Activated naive CD4-positive, alpha-beta T cell treated with anti-CD3 and anti-CD28 coated beads for 36 hours (primary cell): ENCODE measurements at regions of chr4 and their contacts with region 1.

Region 1: GRCh38 chr4:110165382-110166285 is 32.8 kb downstream of the ELOVL6 start:
- DNase-seq: peak; percentile 85
- H3K4me3 Mint-ChIP-seq: peak overlapping the region; percentile 54
- H3K27ac Mint-ChIP-seq: peak overlapping the region; percentile 95
- H3K4me1 Mint-ChIP-seq: peaks cover 35% of the 10 kb centered on the region
- H3K27me3 Mint-ChIP-seq: no peaks in the 10 kb centered on the region

Region 2: GRCh38 chr4:109977854-109978501 is 187.7 kb before region 1 on chr4:
- CTCF ChIA-PET with region 1: no interaction called
- intact Hi-C with region 1: no loop called
- DNase-seq: peak; percentile 13
- H3K4me3 Mint-ChIP-seq: no peak overlapping the region
- H3K27ac Mint-ChIP-seq: no peak overlapping the region
- H3K4me1 Mint-ChIP-seq: no peaks in the 10 kb centered on the region
- H3K27me3 Mint-ChIP-seq: peaks cover 7% of the 10 kb centered on the region

Region 3: GRCh38 chr4:110124711-110125110 is 40.9 kb before region 1 on chr4:
- CTCF ChIA-PET with region 1: no interaction called
- intact Hi-C with region 1: loop called (anchors 5 kb)
- DNase-seq: no peak
- H3K4me3 Mint-ChIP-seq: no peak overlapping the region
- H3K27ac Mint-ChIP-seq: no peak overlapping the region
- H3K4me1 Mint-ChIP-seq: peaks cover 8% of the 10 kb centered on the region
- H3K27me3 Mint-ChIP-seq: no peaks in the 10 kb centered on the region

Region 4: GRCh38 chr4:110418641-110419040 is 253.0 kb after region 1 on chr4:
- CTCF ChIA-PET with region 1: no interaction called
- intact Hi-C with region 1: no loop called
- DNase-seq: no peak
- H3K4me3 Mint-ChIP-seq: no peak overlapping the region
- H3K27ac Mint-ChIP-seq: no peak overlapping the region
- H3K4me1 Mint-ChIP-seq: no peaks in the 10 kb centered on the region
- H3K27me3 Mint-ChIP-seq: peaks cover 20% of the 10 kb centered on the region

Region 5: GRCh38 chr4:110503270-110504083 is 337.8 kb after region 1 on chr4:
- CTCF ChIA-PET with region 1: no interaction called
- intact Hi-C with region 1: no loop called
- DNase-seq: no peak
- H3K4me3 Mint-ChIP-seq: no peak overlapping the region
- H3K27ac Mint-ChIP-seq: no peak overlapping the region
- H3K4me1 Mint-ChIP-seq: no peaks in the 10 kb centered on the region
- H3K27me3 Mint-ChIP-seq: peaks cover 13% of the 10 kb centered on the region

Region 6: DNA sequence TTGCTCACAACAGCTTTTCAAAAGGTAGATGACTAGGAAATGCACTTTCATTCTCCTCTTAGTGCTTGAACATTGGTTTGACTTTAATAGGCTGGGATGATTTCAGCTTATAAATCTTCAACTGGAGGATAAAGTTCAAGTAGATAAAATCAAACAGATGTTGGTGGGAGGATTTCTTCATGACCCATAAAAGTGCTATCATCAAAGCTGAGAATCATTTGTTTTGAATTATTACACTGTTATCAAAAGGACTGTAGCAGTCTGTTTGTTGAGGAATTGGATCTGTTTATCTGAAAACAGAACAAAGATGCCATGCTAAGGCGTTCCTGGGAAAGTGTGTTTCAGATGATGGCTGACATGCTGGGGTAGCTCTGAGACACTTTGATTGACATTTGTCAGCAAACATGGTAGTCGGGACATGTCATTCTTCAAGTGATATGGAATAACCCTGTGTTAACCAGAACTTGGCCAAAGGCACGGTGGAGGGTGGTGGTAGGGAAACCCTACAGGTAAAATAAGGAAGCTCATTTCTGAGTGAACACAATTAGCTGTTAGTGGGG is 761.3 kb after region 1 on chr4:
- CTCF ChIA-PET with region 1: no interaction called
- intact Hi-C with region 1: no loop called
- DNase-seq: no peak
- H3K4me3 Mint-ChIP-seq: no peak overlapping the region
- H3K27ac Mint-ChIP-seq: no peak overlapping the region
- H3K4me1 Mint-ChIP-seq: no peaks in the 10 kb centered on the region
- H3K27me3 Mint-ChIP-seq: no peaks in the 10 kb centered on the region